Psoas muscle (tissue), 8 donors: ENCODE measurements at regions of chr22 and their contacts with region 1.

Region 1: GRCh38 chr22:25039754-25040153 is 87.2 kb downstream of the KIAA1671 start:
- DNase-seq: no peak
- ATAC-seq: no peak
- H3K4me3 ChIP-seq: no peak overlapping the region
- H3K27ac ChIP-seq: no peak overlapping the region
- H3K4me1 ChIP-seq: no peaks in the 10 kb centered on the region
- H3K27me3 ChIP-seq: no peaks in the 10 kb centered on the region
- CTCF ChIP-seq: no peak

Region 2: GRCh38 chr22:25016311-25016710 is 23.4 kb before region 1 on chr22:
- intact Hi-C with region 1: loop called in 1 of 2 experiments (anchors 2 kb)
- DNase-seq: no peak
- ATAC-seq: no peak
- H3K4me3 ChIP-seq: no peak overlapping the region
- H3K27ac ChIP-seq: no peak overlapping the region
- H3K4me1 ChIP-seq: peaks cover 5% of the 10 kb centered on the region
- H3K27me3 ChIP-seq: peaks cover 0 to 7% (median 2%) of the 10 kb centered on the region in 3 donors
- CTCF ChIP-seq: no peak